CD8-positive, alpha-beta memory T cell (primary cell): ENCODE measurements at regions of chr22 and their contacts with region 1.

Region 1: DNA sequence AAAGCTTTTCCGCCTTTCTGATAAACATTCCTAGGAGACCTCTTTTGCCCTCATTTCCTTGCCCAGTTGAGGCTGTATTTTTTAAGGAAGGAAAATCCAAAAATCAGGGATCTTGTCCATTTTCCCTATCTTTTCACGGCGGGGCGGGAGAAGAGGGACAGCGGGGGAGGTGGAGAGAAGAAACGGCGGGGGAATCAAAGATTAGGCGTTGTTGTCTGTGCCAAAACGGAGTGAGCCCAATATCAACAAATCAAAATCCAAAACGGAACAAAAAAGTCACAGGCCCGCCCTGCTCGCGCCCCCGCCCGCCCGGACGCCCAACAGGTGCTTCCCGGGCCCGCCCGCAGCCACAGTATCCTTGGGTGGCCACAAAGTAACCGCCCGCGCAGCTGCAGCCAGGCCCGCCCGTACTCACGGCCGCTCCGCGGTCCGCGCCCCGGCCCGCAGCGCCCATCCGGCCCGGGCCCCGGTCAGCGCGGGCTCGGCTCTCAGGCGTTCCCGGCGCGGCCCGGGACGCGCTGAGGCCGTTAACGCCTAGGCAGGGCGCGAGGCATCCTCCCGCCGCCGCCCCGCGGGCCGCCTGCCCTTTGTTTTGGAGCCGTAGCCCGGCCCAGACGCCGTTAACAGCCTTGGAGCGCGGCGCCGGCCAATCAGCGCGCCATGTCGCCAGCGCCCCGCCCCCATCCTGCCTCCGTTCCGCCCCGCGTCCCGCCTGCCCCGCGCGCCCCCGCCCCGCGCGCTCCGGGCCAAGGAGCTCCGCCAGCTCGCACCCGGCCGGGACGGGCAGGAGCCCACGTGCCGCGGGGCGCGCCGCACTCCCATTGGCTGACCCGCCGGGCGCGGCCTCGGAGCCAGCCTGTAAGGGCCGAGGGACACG is at the start of gene YPEL1:
- DNase-seq: peak; percentile 94 to 98 (median 95)
- H3K4me3 ChIP-seq: peak within 1 kb of the TSS; percentile 91
- H3K4me3 Mint-ChIP-seq: peak within 1 kb of the TSS; percentile 81 to 99 (median 92)
- H3K27ac ChIP-seq: peak within 1 kb of the TSS; percentile 63
- H3K27ac Mint-ChIP-seq: peak within 1 kb of the TSS; percentile 40 to 99 (median 92)
- H3K4me1 ChIP-seq: peaks cover 12% of the 10 kb centered on the region
- H3K4me1 Mint-ChIP-seq: peaks cover 25 to 42% (median 33%) of the 10 kb centered on the region in 3 donors
- H3K27me3 ChIP-seq: peaks cover 5% of the 10 kb centered on the region
- H3K27me3 Mint-ChIP-seq: no peaks in the 10 kb centered on the region
- total RNA-seq, gene YPEL1: 2.4 to 2.6 TPM

Region 2: GRCh38 chr22:21719024-21719423 is 16.4 kb before region 1 on chr22:
- CTCF ChIA-PET with region 1: no interaction called
- POLR2A ChIA-PET with region 1: no interaction called
- DNase-seq: no peak
- H3K4me3 ChIP-seq: no peak overlapping the region
- H3K4me3 Mint-ChIP-seq: no peak overlapping the region
- H3K27ac ChIP-seq: no peak overlapping the region
- H3K27ac Mint-ChIP-seq: peak overlapping the region in 7 of 8 donors; percentile 37 to 96 (median 68)
- H3K4me1 ChIP-seq: no peaks in the 10 kb centered on the region
- H3K4me1 Mint-ChIP-seq: peaks cover 7 to 27% (median 12%) of the 10 kb centered on the region in 3 donors
- H3K27me3 ChIP-seq: no peaks in the 10 kb centered on the region
- H3K27me3 Mint-ChIP-seq: no peaks in the 10 kb centered on the region

Region 3: DNA sequence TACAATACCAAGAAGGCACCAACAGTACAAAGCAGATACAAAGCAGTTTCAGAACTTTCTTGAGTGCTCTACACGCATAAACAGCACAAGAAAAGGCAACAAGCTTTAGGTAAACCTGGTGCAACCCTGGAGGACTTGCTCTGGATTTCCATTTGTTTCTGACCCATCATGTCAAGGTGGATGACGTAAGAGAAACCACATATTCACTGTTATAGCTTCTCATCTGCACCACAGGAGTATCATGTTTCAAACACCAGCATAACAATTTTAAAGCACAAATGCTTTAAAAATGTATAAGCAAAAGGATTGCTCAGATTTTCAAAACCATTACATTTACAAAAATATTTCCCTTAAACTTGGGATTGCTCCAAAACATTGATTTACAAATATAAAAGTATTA is 25.2 kb after region 1 on chr22:
- CTCF ChIA-PET with region 1: interaction called, 18 read pairs
- POLR2A ChIA-PET with region 1: interaction called, 14 read pairs
- DNase-seq: peak in 1 of 5 donors; percentile 34
- H3K4me3 ChIP-seq: no peak overlapping the region
- H3K4me3 Mint-ChIP-seq: peak overlapping the region in 5 of 7 donors; percentile 15 to 61 (median 29)
- H3K27ac ChIP-seq: no peak overlapping the region
- H3K27ac Mint-ChIP-seq: peak overlapping the region; percentile 57 to 91 (median 74)
- H3K4me1 ChIP-seq: peaks cover 56% of the 10 kb centered on the region
- H3K4me1 Mint-ChIP-seq: peaks cover 80 to 81% (median 81%) of the 10 kb centered on the region in 3 donors
- H3K27me3 ChIP-seq: no peaks in the 10 kb centered on the region
- H3K27me3 Mint-ChIP-seq: no peaks in the 10 kb centered on the region

Region 4: DNA sequence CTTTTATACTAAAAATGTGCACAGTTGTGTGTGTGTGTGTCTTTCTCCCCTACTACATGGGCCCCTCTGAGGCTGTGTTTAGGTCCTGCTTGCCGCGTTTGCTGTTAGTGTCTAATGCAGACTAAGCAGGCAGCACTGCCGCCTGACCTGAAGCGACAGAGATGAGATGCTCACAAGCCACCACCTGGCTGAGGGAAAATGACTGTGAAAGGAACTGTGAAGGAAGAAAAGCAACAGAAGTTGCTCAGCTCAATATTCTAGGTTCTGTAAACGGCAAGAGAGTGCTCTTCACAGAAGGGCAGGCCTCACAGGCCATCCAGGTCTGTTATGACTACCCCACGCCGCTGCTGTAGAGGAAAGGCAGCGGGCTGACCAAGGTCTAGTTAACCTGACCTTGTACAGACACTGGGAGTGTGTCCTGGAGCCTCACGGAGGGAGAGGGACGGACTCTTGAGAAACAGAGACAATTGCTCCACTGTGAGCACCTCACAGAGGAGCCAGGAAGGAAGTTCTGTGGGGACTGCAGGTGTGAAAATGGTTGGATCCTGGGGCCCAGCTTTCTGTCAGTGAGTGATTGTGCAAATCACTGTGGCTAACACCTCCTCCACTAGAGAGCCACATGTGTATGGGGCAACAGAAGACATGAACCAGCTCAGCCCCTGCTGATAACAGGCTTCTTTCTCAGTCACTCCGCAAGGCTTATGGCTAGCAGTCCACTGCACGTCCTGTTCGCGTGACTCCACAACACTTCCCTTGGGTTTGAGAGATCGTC is 31.4 kb after region 1 on chr22:
- CTCF ChIA-PET with region 1: interaction called, 18 read pairs
- POLR2A ChIA-PET with region 1: interaction called, 14 read pairs
- DNase-seq: peak; percentile 17 to 89 (median 69)
- H3K4me3 ChIP-seq: no peak overlapping the region
- H3K4me3 Mint-ChIP-seq: peak overlapping the region; percentile 64 to 90 (median 83)
- H3K27ac ChIP-seq: peak overlapping the region; percentile 55
- H3K27ac Mint-ChIP-seq: peak overlapping the region; percentile 91 to 99 (median 96)
- H3K4me1 ChIP-seq: peaks cover 64% of the 10 kb centered on the region
- H3K4me1 Mint-ChIP-seq: peaks cover 73 to 80% (median 79%) of the 10 kb centered on the region in 3 donors
- H3K27me3 ChIP-seq: no peaks in the 10 kb centered on the region
- H3K27me3 Mint-ChIP-seq: no peaks in the 10 kb centered on the region